MCF 10A (cell line): ENCODE measurements at regions of chr11 and their contacts with region 1.

Region 1: DNA sequence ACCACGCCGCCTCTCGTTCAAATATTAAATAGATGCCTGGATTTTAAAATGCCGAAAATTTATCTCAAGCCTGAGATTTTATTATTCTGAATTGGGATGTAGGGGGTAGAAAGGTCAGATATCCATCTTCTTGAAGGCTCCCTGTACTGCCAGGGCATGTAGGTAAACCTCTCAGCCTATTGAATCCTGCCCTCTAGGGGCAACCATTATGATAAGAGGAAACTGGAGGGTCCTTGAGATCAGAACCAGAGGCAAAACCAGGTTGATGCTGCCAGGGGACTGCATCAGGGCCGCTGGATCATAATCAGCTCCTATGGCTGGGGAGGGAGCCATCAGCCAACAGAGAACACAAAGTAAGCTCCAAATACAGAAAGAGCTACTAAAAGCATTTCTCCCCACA is 92.4 kb downstream of the KCNC1 start:
- DNase-seq: peak; percentile 35
- H3K4me3 Mint-ChIP-seq: no peak overlapping the region
- H3K27ac Mint-ChIP-seq: no peak overlapping the region
- H3K4me1 Mint-ChIP-seq: no peaks in the 10 kb centered on the region
- H3K27me3 Mint-ChIP-seq: no peaks in the 10 kb centered on the region
- CTCF ChIP-seq: peak; percentile 26

Region 2: GRCh38 chr11:17598700-17599459 is 228.1 kb before region 1 on chr11:
- CTCF ChIA-PET with region 1: interaction called, 3 read pairs
- POLR2A ChIA-PET with region 1: no interaction called
- intact Hi-C with region 1: loop called (anchors 10 kb)
- DNase-seq: peak; percentile 62
- H3K4me3 Mint-ChIP-seq: no peak overlapping the region
- H3K27ac Mint-ChIP-seq: no peak overlapping the region
- H3K4me1 Mint-ChIP-seq: no peaks in the 10 kb centered on the region
- H3K27me3 Mint-ChIP-seq: peaks cover 21% of the 10 kb centered on the region
- CTCF ChIP-seq: peak; percentile 89

Region 3: GRCh38 chr11:17760102-17761029 is 66.6 kb before region 1 on chr11:
- CTCF ChIA-PET with region 1: interaction called, 7 read pairs
- POLR2A ChIA-PET with region 1: no interaction called
- intact Hi-C with region 1: loop called (anchors 10 kb)
- DNase-seq: peak; percentile 62
- H3K4me3 Mint-ChIP-seq: no peak overlapping the region
- H3K27ac Mint-ChIP-seq: no peak overlapping the region
- H3K4me1 Mint-ChIP-seq: no peaks in the 10 kb centered on the region
- H3K27me3 Mint-ChIP-seq: peaks cover 40% of the 10 kb centered on the region
- CTCF ChIP-seq: peak; percentile 41

Region 4: GRCh38 chr11:17812091-17812839 is 14.7 kb before region 1 on chr11:
- CTCF ChIA-PET with region 1: interaction called, 11 read pairs
- POLR2A ChIA-PET with region 1: interaction called, 3 read pairs
- intact Hi-C with region 1: no loop called
- DNase-seq: no peak
- H3K4me3 Mint-ChIP-seq: no peak overlapping the region
- H3K27ac Mint-ChIP-seq: no peak overlapping the region
- H3K4me1 Mint-ChIP-seq: peaks cover 15% of the 10 kb centered on the region
- H3K27me3 Mint-ChIP-seq: no peaks in the 10 kb centered on the region
- CTCF ChIP-seq: no peak

Region 5: GRCh38 chr11:17954395-17955252 is 127.6 kb after region 1 on chr11:
- CTCF ChIA-PET with region 1: no interaction called
- POLR2A ChIA-PET with region 1: no interaction called
- intact Hi-C with region 1: no loop called
- DNase-seq: no peak
- H3K4me3 Mint-ChIP-seq: no peak overlapping the region
- H3K27ac Mint-ChIP-seq: no peak overlapping the region
- H3K4me1 Mint-ChIP-seq: no peaks in the 10 kb centered on the region
- H3K27me3 Mint-ChIP-seq: no peaks in the 10 kb centered on the region
- CTCF ChIP-seq: no peak